Naive thymus-derived CD4-positive, alpha-beta T cell (primary cell): ENCODE measurements at regions of chr10 and their contacts with region 1.

Region 1: DNA sequence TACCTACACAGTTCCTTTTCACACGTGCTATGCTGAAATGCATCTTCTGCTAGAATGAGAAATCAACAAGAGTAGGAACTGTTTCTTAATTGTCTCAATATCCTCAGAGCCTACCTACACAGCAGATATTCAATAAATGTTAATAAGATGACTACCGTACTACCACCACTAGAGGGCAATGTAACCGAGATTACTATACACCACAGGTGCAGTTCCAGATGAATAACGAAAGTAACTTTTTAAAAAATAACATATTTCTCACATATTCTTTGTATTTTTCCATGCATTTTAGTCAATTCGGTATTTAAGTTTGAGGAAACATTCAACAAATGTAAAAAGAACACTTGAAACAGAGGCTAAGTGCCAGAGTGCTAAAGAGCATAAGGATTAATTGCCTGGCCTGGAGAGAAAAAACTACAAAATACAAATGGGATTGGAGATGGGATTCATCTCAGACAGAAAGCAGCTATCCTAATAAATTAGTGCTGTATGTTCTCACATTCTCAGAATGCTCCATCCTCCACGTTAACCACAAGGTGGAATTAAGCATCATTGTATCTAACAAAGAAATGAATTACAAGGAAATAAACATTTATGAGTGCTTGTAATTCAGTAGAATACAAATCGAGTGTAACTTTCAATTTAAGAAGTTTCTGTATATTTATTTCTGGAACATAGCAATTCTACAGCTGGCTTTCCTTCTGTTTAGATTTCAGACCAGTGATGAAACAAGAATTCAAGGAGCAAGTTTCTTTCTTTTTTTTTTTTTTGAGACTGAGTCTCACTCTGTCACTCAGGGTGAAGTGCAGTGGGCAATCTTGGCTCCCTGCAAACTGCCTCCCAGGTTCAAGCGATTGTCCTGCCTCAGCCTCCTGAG is 20.3 kb upstream of the HECTD2 start:
- DNase-seq: peak in 7 of 9 donors; percentile 51 to 76 (median 68)
- ATAC-seq: peak; percentile 98
- H3K4me3 ChIP-seq: no peak overlapping the region
- H3K4me3 Mint-ChIP-seq: peak overlapping the region in 6 of 10 donors; percentile 4 to 67 (median 38)
- H3K27ac ChIP-seq: no peak overlapping the region
- H3K27ac Mint-ChIP-seq: peak overlapping the region in 1 of 9 donors; percentile 30
- H3K4me1 ChIP-seq: no peaks in the 10 kb centered on the region
- H3K4me1 Mint-ChIP-seq: peaks cover 0 to 11% (median 6%) of the 10 kb centered on the region in 7 donors
- H3K27me3 ChIP-seq: no peaks in the 10 kb centered on the region
- H3K27me3 Mint-ChIP-seq: peaks cover 12 to 34% (median 20%) of the 10 kb centered on the region in 5 donors

Region 2: DNA sequence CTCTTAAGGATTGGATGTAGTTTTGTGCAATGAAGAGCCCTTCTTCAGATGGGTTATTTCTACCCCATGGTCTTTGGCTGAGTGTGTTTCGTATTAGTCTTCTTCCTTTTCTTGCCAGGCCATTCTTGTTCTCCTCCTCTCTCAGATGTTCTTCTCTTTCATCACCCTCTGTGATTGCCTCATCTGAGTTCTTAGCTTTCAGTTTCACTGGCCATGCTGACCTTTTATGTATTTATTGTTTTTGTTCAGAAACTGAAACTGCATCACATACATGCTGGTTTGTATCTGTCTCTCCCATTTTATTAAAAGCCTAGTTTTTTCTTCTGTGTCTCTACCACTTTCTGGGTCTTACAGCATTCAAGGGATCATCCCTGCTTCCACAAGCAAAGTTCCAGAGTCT is 191.1 kb before region 1 on chr10:
- CTCF ChIA-PET with region 1: no interaction called
- POLR2A ChIA-PET with region 1: no interaction called
- intact Hi-C with region 1: no loop called
- DNase-seq: peak in 5 of 9 donors; percentile 21 to 45 (median 28)
- ATAC-seq: peak; percentile 55
- H3K4me3 ChIP-seq: no peak overlapping the region
- H3K4me3 Mint-ChIP-seq: peak overlapping the region in 8 of 10 donors; percentile 9 to 82 (median 54)
- H3K27ac ChIP-seq: peak overlapping the region; percentile 59
- H3K27ac Mint-ChIP-seq: peak overlapping the region; percentile 44 to 94 (median 86)
- H3K4me1 ChIP-seq: peaks cover 55 to 57% of the 10 kb centered on the region in 2 donors
- H3K4me1 Mint-ChIP-seq: peaks cover 55 to 91% (median 86%) of the 10 kb centered on the region in 7 donors
- H3K27me3 ChIP-seq: no peaks in the 10 kb centered on the region
- H3K27me3 Mint-ChIP-seq: no peaks in the 10 kb centered on the region

Region 3: GRCh38 chr10:91378061-91378460 is 11.8 kb before region 1 on chr10:
- CTCF ChIA-PET with region 1: interaction called, 12 read pairs
- POLR2A ChIA-PET with region 1: no interaction called
- intact Hi-C with region 1: no loop called
- DNase-seq: peak in 7 of 9 donors; percentile 35 to 61 (median 50)
- ATAC-seq: peak; percentile 88
- H3K4me3 ChIP-seq: no peak overlapping the region
- H3K4me3 Mint-ChIP-seq: peak overlapping the region in 4 of 10 donors; percentile 1 to 51 (median 15)
- H3K27ac ChIP-seq: no peak overlapping the region
- H3K27ac Mint-ChIP-seq: no peak overlapping the region
- H3K4me1 ChIP-seq: peaks cover 11 to 16% of the 10 kb centered on the region in 2 donors
- H3K4me1 Mint-ChIP-seq: peaks cover 0 to 38% (median 32%) of the 10 kb centered on the region in 7 donors
- H3K27me3 ChIP-seq: no peaks in the 10 kb centered on the region
- H3K27me3 Mint-ChIP-seq: peaks cover 7 to 40% (median 21%) of the 10 kb centered on the region in 5 donors

Region 4: DNA sequence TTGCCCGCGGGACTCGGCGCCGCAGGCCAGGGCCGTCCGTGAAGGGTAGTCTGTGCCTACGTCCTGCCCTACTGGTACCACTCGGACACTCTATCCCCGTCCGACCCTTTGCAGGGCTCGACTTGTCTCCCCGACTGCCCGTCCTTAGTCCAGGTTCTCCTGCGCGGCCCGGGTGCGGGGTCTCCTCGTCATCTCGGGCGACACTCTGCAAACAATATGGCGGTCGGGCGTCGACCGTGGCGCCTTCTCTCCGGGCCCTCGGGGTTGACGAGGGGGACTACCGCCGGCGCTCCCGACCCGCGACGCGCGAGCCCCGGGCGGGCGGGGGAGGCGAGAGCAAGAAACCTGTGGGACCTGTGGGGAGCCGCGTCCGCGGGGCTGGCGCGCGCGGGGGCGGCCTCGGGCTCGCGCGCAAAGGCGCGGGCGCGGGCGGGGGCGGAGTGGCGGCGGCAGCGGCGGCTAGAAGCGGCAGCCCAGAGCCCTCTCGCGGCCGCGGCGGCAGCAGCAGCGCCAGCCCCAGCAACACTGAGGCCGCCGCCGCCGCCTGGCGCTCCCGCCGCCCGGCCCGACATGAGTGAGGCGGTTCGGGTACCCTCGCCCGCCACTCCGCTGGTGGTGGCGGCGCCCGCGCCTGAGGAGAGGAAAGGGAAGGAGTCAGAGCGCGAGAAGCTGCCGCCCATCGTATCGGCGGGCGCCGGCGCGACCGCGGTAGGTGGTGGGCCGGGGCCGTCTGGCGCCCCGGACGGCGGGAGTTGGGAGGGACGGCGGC is 20.2 kb after region 1 on chr10 and contains the start of gene HECTD2:
- CTCF ChIA-PET with region 1: interaction called, 3 read pairs
- POLR2A ChIA-PET with region 1: interaction called, 11 read pairs
- intact Hi-C with region 1: loop called (anchors 1 kb)
- DNase-seq: peak; percentile 76 to 89 (median 86)
- ATAC-seq: peak; percentile 93
- H3K4me3 ChIP-seq: peak within 1 kb of the TSS; percentile 83
- H3K4me3 Mint-ChIP-seq: peak within 1 kb of the TSS; percentile 75 to 93 (median 90)
- H3K27ac ChIP-seq: peak within 1 kb of the TSS; percentile 88
- H3K27ac Mint-ChIP-seq: peak within 1 kb of the TSS; percentile 81 to 96 (median 91)
- H3K4me1 ChIP-seq: peaks cover 8 to 17% of the 10 kb centered on the region in 2 donors
- H3K4me1 Mint-ChIP-seq: peaks cover 8 to 18% (median 13%) of the 10 kb centered on the region in 7 donors
- H3K27me3 ChIP-seq: no peaks in the 10 kb centered on the region
- H3K27me3 Mint-ChIP-seq: peaks cover 0 to 27% (median 0%) of the 10 kb centered on the region in 5 donors
- total RNA-seq, gene HECTD2: 1.1 to 4.6 (median 2.0) TPM

Region 5: GRCh38 chr10:91632671-91633550 is 243.0 kb after region 1 on chr10 and contains the start of gene PPP1R3C:
- CTCF ChIA-PET with region 1: interaction called, 6 read pairs
- POLR2A ChIA-PET with region 1: no interaction called
- intact Hi-C with region 1: loop called (anchors 1 kb)
- DNase-seq: peak; percentile 5 to 60 (median 17)
- ATAC-seq: peak; percentile 65
- H3K4me3 ChIP-seq: peak within 1 kb of the TSS; percentile 33
- H3K4me3 Mint-ChIP-seq: peak within 1 kb of the TSS; percentile 68 to 76 (median 73)
- H3K27ac ChIP-seq: no peak within 1 kb of the TSS
- H3K27ac Mint-ChIP-seq: peak within 1 kb of the TSS in 1 of 9 donors; percentile 7
- H3K4me1 ChIP-seq: peaks cover 0 to 5% of the 10 kb centered on the region in 2 donors
- H3K4me1 Mint-ChIP-seq: peaks cover 0 to 15% (median 7%) of the 10 kb centered on the region in 7 donors
- H3K27me3 ChIP-seq: peaks cover 0 to 14% of the 10 kb centered on the region in 2 donors
- H3K27me3 Mint-ChIP-seq: peaks cover 61 to 74% (median 64%) of the 10 kb centered on the region in 5 donors
- total RNA-seq, gene PPP1R3C: 0.15 TPM in 1 of 5 experiments, not detected in the others